Mucosa of descending colon (tissue), 3 donors: ENCODE measurements at regions of chrX and their contacts with region 1.

Region 1: DNA sequence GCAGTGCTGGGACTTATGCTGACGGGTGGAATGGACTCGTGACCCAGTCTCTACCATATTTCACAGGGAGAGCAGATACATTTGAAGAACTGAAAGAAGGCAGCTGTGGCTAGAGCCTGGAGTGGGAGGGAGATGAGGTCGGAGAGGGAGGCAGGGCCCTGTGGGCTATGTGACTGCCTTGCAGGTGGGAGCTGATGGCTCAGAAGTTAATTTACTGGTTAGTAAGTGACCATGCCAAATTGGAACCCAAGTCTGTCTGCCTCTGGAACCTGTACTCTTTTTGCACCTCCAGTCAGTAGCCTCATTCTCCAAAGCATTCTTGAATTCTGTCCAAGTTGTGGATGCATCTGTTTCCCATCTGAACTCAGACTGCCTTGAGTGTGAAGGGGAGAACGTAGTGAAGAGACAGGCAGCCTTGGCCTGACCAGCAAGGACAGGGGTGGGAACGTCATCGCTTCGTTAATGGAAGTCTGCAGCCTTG is 92.3 kb downstream of the REPS2 start:
- DNase-seq: no peak
- ATAC-seq: peak; percentile 32
- H3K4me3 ChIP-seq: no peak overlapping the region
- H3K4me1 ChIP-seq: no peaks in the 10 kb centered on the region
- CTCF ChIP-seq: no peak

Region 2: GRCh38 chrX:16654093-16654492 is 384.6 kb before region 1 on chrX:
- intact Hi-C with region 1: no loop called
- DNase-seq: no peak
- ATAC-seq: no peak
- H3K4me3 ChIP-seq: no peak overlapping the region
- H3K4me1 ChIP-seq: no peaks in the 10 kb centered on the region
- CTCF ChIP-seq: no peak

Region 3: GRCh38 chrX:16882702-16883486 is 155.8 kb before region 1 on chrX:
- intact Hi-C with region 1: loop called in 1 of 2 experiments (anchors 10 kb)
- DNase-seq: peak; percentile 73 to 82 (median 76)
- ATAC-seq: peak; percentile 84
- H3K4me3 ChIP-seq: no peak overlapping the region
- H3K4me1 ChIP-seq: no peaks in the 10 kb centered on the region
- CTCF ChIP-seq: no peak

Region 4: DNA sequence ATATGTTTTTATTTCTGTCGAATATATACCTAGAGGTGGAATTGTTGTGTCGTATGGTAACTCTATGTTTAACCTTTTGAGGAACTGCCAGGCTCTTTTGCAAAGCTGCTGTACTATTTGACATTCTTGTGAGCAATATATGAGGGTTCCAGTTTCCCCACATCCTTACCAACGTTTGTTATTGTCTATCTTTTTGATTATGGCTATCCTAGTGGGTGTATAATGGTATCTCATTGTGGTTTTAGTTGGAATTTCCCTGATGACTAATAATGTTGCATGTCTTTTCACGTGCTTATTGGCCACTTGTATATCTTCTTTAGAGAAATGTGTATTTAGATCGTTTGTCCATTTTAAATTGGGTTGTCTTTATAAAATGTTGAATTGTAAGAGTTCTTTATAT is 67.7 kb before region 1 on chrX:
- intact Hi-C with region 1: no loop called
- DNase-seq: no peak
- ATAC-seq: no peak
- H3K4me3 ChIP-seq: no peak overlapping the region
- H3K4me1 ChIP-seq: no peaks in the 10 kb centered on the region
- CTCF ChIP-seq: no peak

Region 5: GRCh38 chrX:17024886-17025285 is 13.8 kb before region 1 on chrX:
- intact Hi-C with region 1: no loop called
- DNase-seq: peak; percentile 48 to 58 (median 52)
- ATAC-seq: peak; percentile 88
- H3K4me3 ChIP-seq: no peak overlapping the region
- H3K4me1 ChIP-seq: no peaks in the 10 kb centered on the region
- CTCF ChIP-seq: no peak